Caco-2 (cell line): ENCODE measurements at regions of chr14 and their contacts with region 1.

Region 1: GRCh38 chr14:89915114-89915878 is 39.2 kb downstream of the EFCAB11 start:
- DNase-seq: peak; percentile 38 to 58
- H3K4me3 ChIP-seq: no peak overlapping the region
- H3K4me3 Mint-ChIP-seq: no peak overlapping the region
- H3K27ac Mint-ChIP-seq: no peak overlapping the region
- H3K4me1 ChIP-seq: no peaks in the 10 kb centered on the region; the same call in 1 of the 2 replicates
- H3K4me1 Mint-ChIP-seq: peaks cover 14% of the 10 kb centered on the region
- H3K27me3 ChIP-seq: no peaks in the 10 kb centered on the region
- H3K27me3 Mint-ChIP-seq: no peaks in the 10 kb centered on the region
- CTCF ChIP-seq: peak; percentile 77 to 87

Region 2: GRCh38 chr14:89330236-89331002 is 584.9 kb before region 1 on chr14:
- CTCF ChIA-PET with region 1: no interaction called
- POLR2A ChIA-PET with region 1: no interaction called
- intact Hi-C with region 1: loop called (anchors 10 kb)
- DNase-seq: no peak
- H3K4me3 ChIP-seq: no peak overlapping the region
- H3K4me3 Mint-ChIP-seq: no peak overlapping the region
- H3K27ac Mint-ChIP-seq: no peak overlapping the region
- H3K4me1 ChIP-seq: no peaks in the 10 kb centered on the region
- H3K4me1 Mint-ChIP-seq: no peaks in the 10 kb centered on the region
- H3K27me3 ChIP-seq: no peaks in the 10 kb centered on the region
- H3K27me3 Mint-ChIP-seq: no peaks in the 10 kb centered on the region
- CTCF ChIP-seq: no peak

Region 3: DNA sequence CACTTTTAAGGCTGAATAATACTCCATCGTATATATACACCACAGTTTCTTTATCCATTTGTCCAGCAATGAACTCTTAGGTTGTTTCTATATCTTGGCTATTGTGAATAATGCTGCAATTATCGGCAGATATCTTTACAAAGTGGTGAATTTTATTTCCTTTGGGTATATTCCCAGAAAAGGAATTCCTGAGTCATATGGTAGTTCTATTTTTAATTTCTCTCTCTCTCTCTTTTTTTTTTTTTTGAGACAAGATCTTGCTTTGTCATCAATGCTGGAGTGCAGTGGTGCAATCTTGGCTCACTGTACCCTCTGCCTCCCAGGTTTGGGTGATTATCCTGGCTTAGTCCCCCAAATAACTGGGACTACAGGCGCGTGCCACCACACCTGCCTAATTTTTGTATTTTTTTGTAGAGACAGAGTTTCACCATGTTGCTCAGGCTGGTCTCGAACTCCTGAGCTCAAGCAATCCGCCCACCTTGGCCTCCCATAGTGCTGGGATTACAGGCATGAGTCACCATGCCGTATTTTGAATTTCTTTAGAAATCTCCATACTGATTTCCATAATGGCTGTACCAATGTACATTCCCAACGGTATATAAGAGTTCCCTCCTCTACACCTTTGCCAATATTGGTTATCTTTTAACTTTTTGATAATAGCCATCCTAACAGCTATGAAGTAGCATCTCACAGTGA is 59.2 kb before region 1 on chr14:
- CTCF ChIA-PET with region 1: no interaction called
- POLR2A ChIA-PET with region 1: no interaction called
- intact Hi-C with region 1: loop called (anchors 2 kb)
- DNase-seq: no peak
- H3K4me3 ChIP-seq: no peak overlapping the region
- H3K4me3 Mint-ChIP-seq: no peak overlapping the region
- H3K27ac Mint-ChIP-seq: no peak overlapping the region
- H3K4me1 ChIP-seq: peaks cover 22% of the 10 kb centered on the region
- H3K4me1 Mint-ChIP-seq: peaks cover 8% of the 10 kb centered on the region
- H3K27me3 ChIP-seq: no peaks in the 10 kb centered on the region
- H3K27me3 Mint-ChIP-seq: no peaks in the 10 kb centered on the region
- CTCF ChIP-seq: no peak